GM12878 (cell line): ENCODE measurements at regions of chr6 and their contacts with region 1.

Region 1: DNA sequence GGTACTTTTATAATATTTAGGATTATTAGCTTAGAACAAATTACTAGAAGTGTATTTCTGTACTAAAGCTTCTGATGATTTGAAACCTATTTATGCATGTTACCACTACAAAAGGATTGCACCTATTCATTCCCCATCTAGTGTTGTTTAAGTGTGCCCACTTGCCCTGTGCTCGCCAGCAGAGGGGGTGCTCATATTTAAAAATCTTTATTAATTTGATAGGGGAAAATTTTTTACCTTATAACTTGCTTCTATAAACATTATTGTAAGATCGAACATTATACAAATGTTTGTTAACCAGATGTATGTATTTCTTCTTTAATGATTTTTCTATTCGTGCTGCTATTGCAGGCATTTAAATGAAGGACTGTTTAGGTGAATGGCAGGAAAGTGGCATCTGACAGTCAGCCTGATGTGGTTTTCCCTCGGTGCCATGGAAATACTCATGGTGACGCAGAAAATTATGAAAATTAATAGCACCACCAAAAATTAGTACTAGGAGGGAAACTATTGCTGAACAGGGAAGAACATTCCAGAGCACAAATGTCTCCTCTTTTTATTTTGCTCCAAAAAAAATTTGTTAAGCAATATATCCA is 44.1 kb upstream of the FNDC1 start:
- DNase-seq: no peak
- ATAC-seq: no peak
- H3K4me3 ChIP-seq: no peak overlapping the region
- H3K27ac ChIP-seq: no peak overlapping the region
- H3K4me1 ChIP-seq: peaks cover 19% of the 10 kb centered on the region
- H3K27me3 ChIP-seq: peaks cover 0 to 3% of the 10 kb centered on the region in 2 experiments; a peak in 1 of 4 replicates
- CTCF ChIP-seq: 0 out of 6 replicates have a peak, but pooled peaks of 2 of the 3 experiments have one; percentile 5 to 9
- EP300 ChIP-seq: no peak
- POLR2A ChIP-seq: no peak
- RAD21 ChIP-seq: 0 out of 2 replicates have a peak, but pooled peaks have one; percentile 2

Region 2: GRCh38 chr6:158819213-158819909 is 305.8 kb before region 1 on chr6 and contains the start of gene EZR:
- CTCF ChIA-PET with region 1: no interaction called
- POLR2A ChIA-PET with region 1: no interaction called
- RAD21 ChIA-PET with region 1: no interaction called
- SMC1A ChIA-PET with region 1: no interaction called
- in situ Hi-C with region 1: no loop called
- intact Hi-C with region 1: no loop called
- DNase-seq: no peak
- ATAC-seq: peak; percentile 66
- H3K4me3 ChIP-seq: peak within 1 kb of the TSS; percentile 82
- H3K27ac ChIP-seq: peak within 1 kb of the TSS; percentile 66
- H3K4me1 ChIP-seq: peaks cover 14% of the 10 kb centered on the region
- H3K27me3 ChIP-seq: no peaks in the 10 kb centered on the region
- CTCF ChIP-seq: no peak; a peak in 1 of 6 replicates
- EP300 ChIP-seq: no peak
- POLR2A ChIP-seq: peak; percentile 93
- RAD21 ChIP-seq: 0 out of 2 replicates have a peak, but pooled peaks have one; percentile 8
- polyA plus RNA-seq, gene EZR: 79.1 to 98.6 TPM

Region 3: GRCh38 chr6:159110013-159110412 is 15.1 kb before region 1 on chr6:
- CTCF ChIA-PET with region 1: interaction called, 529 read pairs
- POLR2A ChIA-PET with region 1: interaction called, 36 read pairs
- RAD21 ChIA-PET with region 1: interaction called, 40 read pairs
- SMC1A ChIA-PET with region 1: interaction called, 292 read pairs
- in situ Hi-C with region 1: no loop called
- intact Hi-C with region 1: no loop called
- DNase-seq: no peak
- ATAC-seq: no peak
- H3K4me3 ChIP-seq: no peak overlapping the region
- H3K27ac ChIP-seq: no peak overlapping the region
- H3K4me1 ChIP-seq: peaks cover 36% of the 10 kb centered on the region
- H3K27me3 ChIP-seq: peaks cover 0 to 3% of the 10 kb centered on the region in 2 experiments; a peak in 1 of 4 replicates
- CTCF ChIP-seq: peak; percentile 66 to 88 (median 77)
- EP300 ChIP-seq: no peak
- POLR2A ChIP-seq: no peak
- RAD21 ChIP-seq: peak; percentile 82